MCF 10A (cell line): ENCODE measurements at regions of chr16 and their contacts with region 1.

Region 1: GRCh38 chr16:24539291-24539849 is at the start of gene RBBP6:
- DNase-seq: peak; percentile 95
- H3K4me3 Mint-ChIP-seq: peak within 1 kb of the TSS; percentile 95
- H3K27ac Mint-ChIP-seq: peak within 1 kb of the TSS; percentile 100
- H3K4me1 Mint-ChIP-seq: peaks cover 6% of the 10 kb centered on the region
- H3K27me3 Mint-ChIP-seq: no peaks in the 10 kb centered on the region
- CTCF ChIP-seq: peak; percentile 7
- total RNA-seq, gene RBBP6: 50.1 and 57.3 TPM in 2 replicates

Region 2: DNA sequence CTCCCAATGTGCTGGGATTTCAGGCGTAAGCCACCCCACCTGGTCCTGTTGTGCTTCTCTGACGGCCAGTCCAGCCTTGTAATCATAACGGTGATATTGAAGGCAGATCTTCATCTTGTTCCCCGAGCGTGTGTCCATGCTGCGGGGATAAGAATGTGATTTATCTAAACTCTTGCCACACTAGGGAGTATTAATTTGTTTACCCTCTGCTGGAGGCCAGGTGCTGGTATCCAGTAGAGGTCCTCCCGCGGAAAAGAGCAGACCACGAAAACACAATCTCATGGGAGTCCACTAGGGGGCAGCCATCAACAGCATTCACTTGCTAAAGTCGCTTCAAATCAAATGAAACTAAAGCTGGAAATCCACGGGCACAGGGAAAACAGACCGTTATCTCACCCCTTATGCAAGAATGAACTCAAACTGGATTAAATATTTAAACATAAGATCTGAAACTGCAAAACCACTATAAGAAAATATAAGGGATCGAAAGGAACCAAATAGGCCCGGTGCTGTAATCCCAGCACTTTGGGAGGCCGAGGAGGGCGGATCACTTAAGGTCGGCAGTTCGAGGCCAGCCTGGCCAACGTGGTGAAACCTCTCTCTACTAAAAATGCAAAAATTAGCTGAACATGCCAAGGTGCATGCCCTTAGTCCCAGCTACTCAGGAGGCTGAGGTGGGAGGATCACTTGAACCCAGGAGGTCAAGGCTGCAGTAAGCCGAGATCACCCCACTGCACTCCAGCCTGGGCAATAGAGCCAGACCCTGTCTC is 22.3 kb before region 1 on chr16:
- CTCF ChIA-PET with region 1: interaction called, 12 read pairs
- POLR2A ChIA-PET with region 1: interaction called, 4 read pairs
- intact Hi-C with region 1: loop called (anchors 1 kb)
- DNase-seq: peak; percentile 86
- H3K4me3 Mint-ChIP-seq: peak overlapping the region; percentile 39
- H3K27ac Mint-ChIP-seq: no peak overlapping the region
- H3K4me1 Mint-ChIP-seq: peaks cover 6% of the 10 kb centered on the region
- H3K27me3 Mint-ChIP-seq: no peaks in the 10 kb centered on the region
- CTCF ChIP-seq: peak; percentile 87

Region 3: GRCh38 chr16:24525970-24526559 is 13.3 kb before region 1 on chr16:
- CTCF ChIA-PET with region 1: interaction called, 12 read pairs
- POLR2A ChIA-PET with region 1: interaction called, 66 read pairs
- intact Hi-C with region 1: no loop called
- DNase-seq: peak; percentile 72
- H3K4me3 Mint-ChIP-seq: no peak overlapping the region
- H3K27ac Mint-ChIP-seq: peak overlapping the region; percentile 65
- H3K4me1 Mint-ChIP-seq: peaks cover 16% of the 10 kb centered on the region
- H3K27me3 Mint-ChIP-seq: no peaks in the 10 kb centered on the region
- CTCF ChIP-seq: no peak

Region 4: GRCh38 chr16:24552705-24553246 is 13.4 kb after region 1 on chr16:
- CTCF ChIA-PET with region 1: interaction called, 6 read pairs
- POLR2A ChIA-PET with region 1: interaction called, 27 read pairs
- intact Hi-C with region 1: no loop called
- DNase-seq: no peak
- H3K4me3 Mint-ChIP-seq: no peak overlapping the region
- H3K27ac Mint-ChIP-seq: no peak overlapping the region
- H3K4me1 Mint-ChIP-seq: no peaks in the 10 kb centered on the region
- H3K27me3 Mint-ChIP-seq: no peaks in the 10 kb centered on the region
- CTCF ChIP-seq: no peak

Region 5: GRCh38 chr16:24598777-24599437 is 59.5 kb after region 1 on chr16:
- CTCF ChIA-PET with region 1: no interaction called
- POLR2A ChIA-PET with region 1: no interaction called
- intact Hi-C with region 1: no loop called
- DNase-seq: no peak
- H3K4me3 Mint-ChIP-seq: no peak overlapping the region
- H3K27ac Mint-ChIP-seq: no peak overlapping the region
- H3K4me1 Mint-ChIP-seq: no peaks in the 10 kb centered on the region
- H3K27me3 Mint-ChIP-seq: no peaks in the 10 kb centered on the region
- CTCF ChIP-seq: no peak

Region 6: DNA sequence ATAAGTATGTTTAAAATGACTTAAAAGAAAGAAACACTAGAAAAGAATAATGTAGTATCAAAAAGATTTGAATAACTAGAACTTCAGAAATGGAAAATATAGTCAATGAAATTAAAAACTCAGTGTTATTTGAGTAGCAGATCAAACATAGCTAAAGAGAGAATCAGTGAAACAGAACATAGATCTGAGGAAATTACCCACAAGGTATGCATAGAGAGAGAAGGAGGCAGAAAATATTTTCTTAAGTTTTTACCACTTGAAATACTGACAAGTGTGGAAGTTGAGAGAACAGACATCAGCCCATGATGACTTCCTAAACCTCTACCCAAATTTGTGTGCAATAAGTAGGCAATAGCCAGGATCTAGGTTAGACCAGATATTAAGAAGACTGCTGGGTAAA is 423.4 kb after region 1 on chr16:
- CTCF ChIA-PET with region 1: no interaction called
- POLR2A ChIA-PET with region 1: no interaction called
- intact Hi-C with region 1: no loop called
- DNase-seq: no peak
- H3K4me3 Mint-ChIP-seq: no peak overlapping the region
- H3K27ac Mint-ChIP-seq: no peak overlapping the region
- H3K4me1 Mint-ChIP-seq: no peaks in the 10 kb centered on the region
- H3K27me3 Mint-ChIP-seq: no peaks in the 10 kb centered on the region
- CTCF ChIP-seq: no peak